ENCODE measurements at regions of chr17 and their contacts with region 1.

Region 1: DNA sequence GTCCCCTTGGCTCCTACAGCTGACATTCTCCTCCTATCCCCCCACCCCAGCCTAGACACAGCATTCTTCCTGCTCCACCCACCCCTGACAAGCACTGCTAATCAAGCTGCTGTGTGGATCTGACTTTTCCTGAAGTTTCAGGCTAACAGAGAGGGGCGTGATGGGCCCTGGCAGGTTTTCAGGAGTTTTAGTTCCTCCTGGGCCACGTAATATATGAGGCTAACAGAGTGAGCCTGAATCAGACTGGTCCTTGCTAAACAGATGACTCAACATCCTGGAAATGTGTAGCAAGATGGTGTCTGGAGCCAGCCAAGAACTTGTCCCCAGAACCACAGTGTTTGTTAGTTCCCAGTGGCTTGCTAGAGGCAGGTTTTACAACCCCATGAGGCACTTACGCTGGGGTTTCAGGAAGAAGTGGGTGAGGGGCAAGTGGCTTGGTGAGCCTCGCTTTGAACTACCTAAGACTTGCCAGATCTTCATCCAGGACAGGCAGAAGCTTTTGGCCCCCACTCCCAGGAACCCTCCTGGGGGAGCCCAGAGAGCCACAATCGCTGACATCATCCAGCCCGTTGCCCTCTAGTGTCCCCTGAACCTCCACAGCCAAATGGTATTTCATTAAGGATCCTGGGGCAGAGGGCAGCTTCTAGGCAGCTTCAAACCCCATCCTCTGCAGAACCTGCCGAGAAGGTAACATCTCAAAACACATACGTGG is 15.9 kb downstream of the TMEM92 start:
- DNase-seq: peak; percentile 100
- ATAC-seq: peak; percentile 88
- H3K4me3 ChIP-seq: peak overlapping the region; percentile 8
- H3K27ac ChIP-seq: peak overlapping the region; percentile 90
- H3K4me1 ChIP-seq: peaks cover 25% of the 10 kb centered on the region
- H3K27me3 ChIP-seq: no peaks in the 10 kb centered on the region
- CTCF ChIP-seq: no peak
- POLR2A ChIP-seq: peak; percentile 55
- RAD21 ChIP-seq: no peak; the same call in 1 of the 2 replicates

Region 2: DNA sequence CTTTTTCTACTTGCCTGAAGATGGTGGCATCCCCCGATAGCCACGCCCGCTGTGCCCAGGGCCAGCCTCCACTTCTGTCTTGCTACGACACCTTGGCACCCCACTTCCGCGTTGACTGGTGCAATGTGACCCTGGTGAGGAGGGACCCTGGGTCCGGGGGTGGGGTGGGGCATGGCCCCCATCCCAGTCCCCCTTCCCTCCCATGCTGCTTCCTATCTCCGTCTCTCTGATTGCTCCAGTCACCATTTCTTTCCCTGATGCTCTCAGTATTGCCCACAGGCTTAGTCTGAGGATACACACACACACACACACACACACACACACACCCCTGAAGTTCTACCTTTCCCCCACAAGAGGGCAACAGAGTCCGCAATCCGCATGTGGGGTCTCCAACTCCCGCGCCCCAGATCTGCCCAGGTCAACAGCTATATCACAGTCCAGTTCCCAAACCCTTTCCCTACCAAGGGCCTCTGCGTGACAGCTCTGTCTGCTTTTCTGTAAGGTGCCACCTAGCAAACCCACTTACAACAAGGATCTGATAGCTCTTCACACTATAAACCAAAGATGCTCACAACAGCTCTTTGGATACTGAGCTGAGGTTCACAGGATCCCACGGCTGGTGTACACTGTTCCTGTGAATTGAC is 120.9 kb before region 1 on chr17:
- CTCF ChIA-PET with region 1: interaction called, 54 read pairs
- POLR2A ChIA-PET with region 1: no interaction called
- dilution Hi-C with region 1: no loop called
- in situ Hi-C with region 1: loop called (anchors 10 kb)
- intact Hi-C with region 1: loop called (anchors 2 kb)
- DNase-seq: peak; percentile 74
- ATAC-seq: peak; percentile 66
- H3K4me3 ChIP-seq: no peak overlapping the region
- H3K27ac ChIP-seq: no peak overlapping the region
- H3K4me1 ChIP-seq: peaks cover 8% of the 10 kb centered on the region
- H3K27me3 ChIP-seq: no peaks in the 10 kb centered on the region
- CTCF ChIP-seq: peak; percentile 96
- POLR2A ChIP-seq: peak; percentile 59
- RAD21 ChIP-seq: peak; percentile 92

Region 3: DNA sequence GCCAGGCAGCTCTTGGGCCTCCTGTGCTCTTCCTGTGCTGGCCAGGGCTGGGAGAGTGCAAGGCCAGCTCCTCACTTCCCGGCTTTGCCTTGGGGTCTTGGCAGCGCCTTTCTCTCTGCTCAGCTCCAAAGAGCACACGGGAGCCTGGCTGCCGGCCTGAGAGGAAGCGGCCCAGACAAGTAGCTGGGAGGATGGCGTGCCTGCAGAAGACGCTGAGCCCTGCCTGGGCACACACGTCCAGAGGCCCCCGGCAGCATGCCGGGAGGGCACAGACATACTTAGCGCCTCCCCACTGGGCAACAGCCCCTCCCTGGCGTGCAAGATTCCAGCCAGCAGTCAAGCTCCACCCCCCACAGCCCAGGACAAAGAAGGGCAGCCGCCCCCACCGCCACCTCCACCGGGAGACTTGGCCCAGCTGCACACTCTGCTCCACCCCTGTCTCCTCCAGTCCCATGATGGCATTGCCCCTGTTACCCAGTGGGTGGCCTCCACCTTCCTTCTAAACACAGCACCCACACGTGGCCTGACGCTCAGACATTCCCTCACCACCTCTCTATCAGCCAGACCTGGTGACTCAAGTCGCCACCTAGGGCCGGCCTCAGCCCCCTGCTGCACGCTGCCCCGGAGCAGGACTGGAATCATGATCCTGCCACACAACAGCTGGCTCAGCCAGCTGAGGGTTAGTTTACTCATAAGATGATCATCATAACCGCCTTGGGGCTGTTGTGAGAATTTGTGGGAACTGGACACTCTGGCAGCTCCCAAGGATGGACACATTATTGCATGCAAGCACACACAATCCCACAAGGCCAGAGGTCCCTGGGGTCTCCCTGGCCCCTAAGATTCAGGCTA is 111.9 kb before region 1 on chr17:
- CTCF ChIA-PET with region 1: interaction called, 6 read pairs
- POLR2A ChIA-PET with region 1: interaction called, 9 read pairs
- dilution Hi-C with region 1: no loop called
- in situ Hi-C with region 1: loop called (anchors 10 kb)
- intact Hi-C with region 1: loop called (anchors 2 kb)
- DNase-seq: peak; percentile 99
- ATAC-seq: peak; percentile 63
- H3K4me3 ChIP-seq: no peak overlapping the region
- H3K27ac ChIP-seq: peak overlapping the region; percentile 84
- H3K4me1 ChIP-seq: peaks cover 30% of the 10 kb centered on the region
- H3K27me3 ChIP-seq: no peaks in the 10 kb centered on the region
- CTCF ChIP-seq: peak; percentile 53
- POLR2A ChIP-seq: no peak; the same call in 1 of the 2 replicates
- RAD21 ChIP-seq: no peak

Region 4: GRCh38 chr17:50331085-50331791 is 41.1 kb after region 1 on chr17:
- CTCF ChIA-PET with region 1: no interaction called
- POLR2A ChIA-PET with region 1: no interaction called
- dilution Hi-C with region 1: no loop called
- in situ Hi-C with region 1: no loop called
- intact Hi-C with region 1: no loop called
- DNase-seq: peak; percentile 99
- ATAC-seq: peak; percentile 53
- H3K4me3 ChIP-seq: no peak overlapping the region
- H3K27ac ChIP-seq: no peak overlapping the region
- H3K4me1 ChIP-seq: no peaks in the 10 kb centered on the region; the same call in 1 of the 2 replicates
- H3K27me3 ChIP-seq: no peaks in the 10 kb centered on the region
- CTCF ChIP-seq: no peak
- POLR2A ChIP-seq: no peak
- RAD21 ChIP-seq: no peak

Region 5: GRCh38 chr17:51580869-51581268 is 1290.7 kb after region 1 on chr17:
- CTCF ChIA-PET with region 1: no interaction called
- POLR2A ChIA-PET with region 1: no interaction called
- dilution Hi-C with region 1: no loop called
- in situ Hi-C with region 1: no loop called
- intact Hi-C with region 1: no loop called
- DNase-seq: no peak
- ATAC-seq: no peak
- H3K4me3 ChIP-seq: no peak overlapping the region
- H3K27ac ChIP-seq: no peak overlapping the region
- H3K4me1 ChIP-seq: no peaks in the 10 kb centered on the region
- H3K27me3 ChIP-seq: no peaks in the 10 kb centered on the region
- CTCF ChIP-seq: no peak
- POLR2A ChIP-seq: no peak
- RAD21 ChIP-seq: no peak